Endothelial cell of umbilical vein (primary cell): ENCODE measurements at regions of chr10 and their contacts with region 1.

Region 1: DNA sequence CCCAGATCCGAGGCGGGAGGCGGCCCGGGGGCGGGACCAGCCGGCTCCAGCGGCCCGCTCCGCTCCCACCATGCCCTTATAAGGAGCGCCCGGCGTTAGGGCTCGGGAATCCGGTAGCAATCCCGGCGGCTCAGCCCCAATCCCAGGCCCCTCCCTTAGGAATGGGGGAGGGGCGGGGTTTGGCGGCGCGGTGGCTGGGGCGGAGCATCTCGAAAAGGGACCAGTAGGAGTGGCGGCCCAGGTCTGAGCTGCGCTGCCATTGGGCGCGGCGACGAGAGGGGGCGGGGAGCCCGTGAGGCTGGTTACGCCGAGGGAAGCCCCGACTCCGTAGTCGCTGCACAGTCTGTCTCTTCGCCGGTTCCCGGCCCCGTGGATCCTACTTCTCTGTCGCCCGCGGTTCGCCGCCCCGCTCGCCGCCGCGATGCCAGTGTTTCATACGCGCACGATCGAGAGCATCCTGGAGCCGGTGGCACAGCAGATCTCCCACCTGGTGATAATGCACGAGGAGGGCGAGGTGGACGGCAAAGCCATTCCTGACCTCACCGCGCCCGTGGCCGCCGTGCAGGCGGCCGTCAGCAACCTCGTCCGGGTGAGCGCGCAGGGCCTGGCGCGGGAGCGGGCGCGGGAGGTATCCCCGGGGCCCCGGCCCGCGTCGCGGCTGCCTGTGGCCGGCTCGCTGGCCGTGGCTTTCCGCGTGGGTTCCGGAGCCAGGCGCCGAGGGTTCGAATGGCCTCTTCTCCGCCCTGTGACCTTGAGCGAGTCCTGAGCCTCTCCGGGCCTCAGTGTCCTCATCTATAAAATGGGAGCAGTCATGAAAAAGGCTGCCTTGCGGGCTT is at the start of gene VCL:
- DNase-seq: peak; percentile 99
- H3K4me3 ChIP-seq: peak within 1 kb of the TSS; percentile 73 to 91 (median 86)
- H3K27ac ChIP-seq: peak within 1 kb of the TSS; percentile 83
- H3K4me1 ChIP-seq: peaks cover 24% of the 10 kb centered on the region
- H3K27me3 ChIP-seq: no peaks in the 10 kb centered on the region
- CTCF ChIP-seq: no peak
- POLR2A ChIP-seq: peak; percentile 99
- total RNA-seq, gene VCL: 203 and 231 TPM in 2 replicates

Region 2: GRCh38 chr10:73956476-73957359 is 41.3 kb before region 1 on chr10:
- CTCF ChIA-PET with region 1: interaction called, 14 read pairs
- POLR2A ChIA-PET with region 1: interaction called, 4 read pairs
- dilution Hi-C with region 1: no loop called
- intact Hi-C with region 1: loop called (anchors 5 kb)
- DNase-seq: peak; percentile 33
- H3K4me3 ChIP-seq: no peak overlapping the region
- H3K27ac ChIP-seq: no peak overlapping the region
- H3K4me1 ChIP-seq: peaks cover 10% of the 10 kb centered on the region
- H3K27me3 ChIP-seq: no peaks in the 10 kb centered on the region
- CTCF ChIP-seq: no peak
- POLR2A ChIP-seq: no peak

Region 3: DNA sequence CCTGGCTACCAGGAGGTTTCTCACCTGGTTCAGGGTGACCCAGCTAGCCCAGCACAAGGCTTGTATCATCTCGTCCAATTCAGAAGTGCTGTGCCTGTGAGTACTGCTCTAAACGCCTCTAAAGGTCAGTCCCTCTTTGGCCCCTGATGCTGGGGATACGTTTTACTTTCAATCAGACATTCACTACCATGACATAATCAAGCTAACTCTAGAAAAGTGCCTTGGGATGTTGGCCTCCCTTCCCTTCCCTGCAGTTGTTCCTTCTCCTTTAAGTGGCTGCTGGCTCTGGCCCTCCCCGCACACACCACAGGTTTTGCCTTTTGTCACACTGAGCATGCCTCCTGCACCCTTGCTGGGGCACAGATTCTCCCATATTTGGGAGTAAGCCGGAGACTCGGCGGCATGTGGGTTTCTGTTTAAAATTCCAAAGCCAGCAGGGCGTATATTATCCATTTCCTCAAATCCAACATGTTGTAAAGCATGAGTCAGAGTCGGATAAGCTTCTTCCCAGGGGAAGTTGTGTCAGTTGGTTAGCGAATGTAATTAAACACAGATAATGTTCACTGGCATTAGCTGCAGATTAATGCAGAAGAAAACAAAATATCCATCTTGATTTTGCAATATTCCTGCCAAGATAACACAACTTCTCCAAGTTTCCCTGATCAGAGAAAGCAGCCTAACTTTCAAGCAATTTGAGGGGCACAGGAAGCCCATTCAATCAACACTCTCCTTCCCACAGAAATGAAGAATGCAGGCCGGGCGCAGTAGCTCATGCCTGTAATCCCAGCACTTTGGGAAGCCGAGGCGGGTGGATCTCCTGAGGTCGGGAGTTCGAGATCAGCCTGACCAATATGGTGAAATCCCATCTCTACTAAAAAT is 31.9 kb before region 1 on chr10:
- CTCF ChIA-PET with region 1: interaction called, 27 read pairs
- POLR2A ChIA-PET with region 1: interaction called, 22 read pairs
- dilution Hi-C with region 1: no loop called
- intact Hi-C with region 1: loop called (anchors 1 kb)
- DNase-seq: peak; percentile 94
- H3K4me3 ChIP-seq: peak overlapping the region in 1 of 3 experiments; percentile 7
- H3K27ac ChIP-seq: peak overlapping the region; percentile 73
- H3K4me1 ChIP-seq: peaks cover 30% of the 10 kb centered on the region
- H3K27me3 ChIP-seq: no peaks in the 10 kb centered on the region
- CTCF ChIP-seq: no peak
- POLR2A ChIP-seq: no peak

Region 4: GRCh38 chr10:74008212-74008731 is 10.3 kb after region 1 on chr10:
- CTCF ChIA-PET with region 1: interaction called, 10 read pairs
- POLR2A ChIA-PET with region 1: interaction called, 4 read pairs
- dilution Hi-C with region 1: no loop called
- intact Hi-C with region 1: no loop called
- DNase-seq: peak; percentile 54
- H3K4me3 ChIP-seq: no peak overlapping the region
- H3K27ac ChIP-seq: peak overlapping the region; percentile 58
- H3K4me1 ChIP-seq: peaks cover 34% of the 10 kb centered on the region
- H3K27me3 ChIP-seq: no peaks in the 10 kb centered on the region
- CTCF ChIP-seq: no peak
- POLR2A ChIP-seq: no peak

Region 5: GRCh38 chr10:74021248-74022055 is 23.4 kb after region 1 on chr10:
- CTCF ChIA-PET with region 1: interaction called, 10 read pairs
- POLR2A ChIA-PET with region 1: interaction called, 5 read pairs
- dilution Hi-C with region 1: no loop called
- intact Hi-C with region 1: no loop called
- DNase-seq: peak; percentile 55
- H3K4me3 ChIP-seq: no peak overlapping the region
- H3K27ac ChIP-seq: peak overlapping the region; percentile 20
- H3K4me1 ChIP-seq: peaks cover 25% of the 10 kb centered on the region
- H3K27me3 ChIP-seq: no peaks in the 10 kb centered on the region
- CTCF ChIP-seq: no peak
- POLR2A ChIP-seq: no peak

Region 6: GRCh38 chr10:74035303-74035702 is 37.3 kb after region 1 on chr10:
- CTCF ChIA-PET with region 1: interaction called, 18 read pairs
- POLR2A ChIA-PET with region 1: interaction called, 4 read pairs
- dilution Hi-C with region 1: no loop called
- intact Hi-C with region 1: no loop called
- DNase-seq: peak; percentile 51
- H3K4me3 ChIP-seq: no peak overlapping the region
- H3K27ac ChIP-seq: no peak overlapping the region
- H3K4me1 ChIP-seq: peaks cover 10% of the 10 kb centered on the region
- H3K27me3 ChIP-seq: no peaks in the 10 kb centered on the region
- CTCF ChIP-seq: peak; percentile 9 to 14
- POLR2A ChIP-seq: no peak